ENCODE measurements at regions of chr13 and their contacts with region 1.

Region 1: DNA sequence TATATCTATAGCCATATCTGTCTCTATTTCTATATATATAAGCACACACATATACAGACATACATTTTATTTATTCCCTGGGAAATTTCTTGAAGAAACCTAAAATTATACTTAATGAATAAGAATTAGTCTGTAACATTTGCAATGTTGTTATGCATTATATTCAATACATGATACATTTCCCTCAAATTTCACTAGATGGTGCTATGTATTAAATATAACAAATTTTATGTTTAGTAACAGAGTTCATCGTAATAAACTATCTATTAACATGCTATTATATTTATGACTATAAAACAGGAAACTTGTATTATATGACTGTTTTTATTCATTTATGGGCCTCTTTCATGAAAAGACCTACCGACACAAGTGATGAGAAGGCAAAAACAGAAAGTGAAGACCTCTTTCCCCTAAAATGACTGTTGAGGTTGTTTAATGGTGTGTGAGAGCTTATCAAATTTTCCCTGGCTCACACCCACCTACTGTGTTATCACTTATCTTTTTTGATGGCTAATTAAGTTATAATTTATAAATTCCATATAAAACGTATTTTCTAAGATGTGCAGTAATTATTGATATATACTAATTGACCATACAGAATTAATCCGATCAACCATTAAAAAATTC is 881.9 kb downstream of the SLITRK6 start:
- DNase-seq: no peak
- H3K4me3 ChIP-seq: no peak overlapping the region
- H3K4me3 Mint-ChIP-seq: no peak overlapping the region
- H3K27ac ChIP-seq: no peak overlapping the region
- H3K27ac Mint-ChIP-seq: no peak overlapping the region
- H3K4me1 ChIP-seq: no peaks in the 10 kb centered on the region
- H3K4me1 Mint-ChIP-seq: no peaks in the 10 kb centered on the region
- H3K27me3 ChIP-seq: no peaks in the 10 kb centered on the region
- H3K27me3 Mint-ChIP-seq: no peaks in the 10 kb centered on the region

Region 2: GRCh38 chr13:84668637-84669036 is 248.7 kb before region 1 on chr13:
- CTCF ChIA-PET with region 1: no interaction called
- POLR2A ChIA-PET with region 1: no interaction called
- intact Hi-C with region 1: no loop called
- DNase-seq: no peak
- H3K4me3 ChIP-seq: no peak overlapping the region
- H3K4me3 Mint-ChIP-seq: no peak overlapping the region
- H3K27ac ChIP-seq: no peak overlapping the region
- H3K27ac Mint-ChIP-seq: no peak overlapping the region
- H3K4me1 ChIP-seq: no peaks in the 10 kb centered on the region
- H3K4me1 Mint-ChIP-seq: no peaks in the 10 kb centered on the region
- H3K27me3 ChIP-seq: no peaks in the 10 kb centered on the region
- H3K27me3 Mint-ChIP-seq: no peaks in the 10 kb centered on the region

Region 3: DNA sequence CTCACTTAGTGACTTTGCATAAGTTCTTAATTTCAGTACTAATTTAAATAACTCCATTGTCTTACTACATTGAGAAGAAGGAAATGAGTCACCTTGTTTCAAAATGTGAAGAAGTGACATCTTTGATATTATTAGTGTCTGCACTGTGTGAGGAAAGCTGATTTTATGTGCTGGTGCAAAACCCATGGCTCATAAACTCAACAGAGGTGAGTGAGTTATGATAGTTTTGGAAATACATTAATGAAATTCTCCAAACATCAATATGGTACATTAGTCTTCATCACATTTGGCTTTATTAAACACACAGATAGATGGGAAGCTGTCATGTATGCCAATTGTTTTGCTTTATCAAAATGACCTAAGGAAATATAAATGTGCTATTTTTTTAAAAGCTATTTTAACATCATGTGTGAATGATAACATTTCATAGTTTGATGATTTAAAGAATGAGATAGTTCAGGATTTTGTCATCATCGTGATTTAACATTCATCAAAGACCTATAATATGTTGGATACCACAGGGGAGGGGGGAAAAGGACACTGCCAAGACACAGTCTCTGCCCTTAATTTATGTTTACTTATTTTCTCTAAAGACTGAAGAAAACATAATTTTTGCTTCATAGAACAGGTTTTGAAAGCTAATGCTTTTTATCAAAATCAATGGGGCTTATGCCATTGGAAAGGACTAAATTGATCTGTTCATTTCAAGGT is 132.8 kb before region 1 on chr13:
- CTCF ChIA-PET with region 1: no interaction called
- POLR2A ChIA-PET with region 1: no interaction called
- intact Hi-C with region 1: no loop called
- DNase-seq: no peak
- H3K4me3 ChIP-seq: no peak overlapping the region
- H3K4me3 Mint-ChIP-seq: no peak overlapping the region
- H3K27ac ChIP-seq: no peak overlapping the region
- H3K27ac Mint-ChIP-seq: no peak overlapping the region
- H3K4me1 ChIP-seq: no peaks in the 10 kb centered on the region
- H3K4me1 Mint-ChIP-seq: no peaks in the 10 kb centered on the region
- H3K27me3 ChIP-seq: no peaks in the 10 kb centered on the region
- H3K27me3 Mint-ChIP-seq: no peaks in the 10 kb centered on the region

Region 4: DNA sequence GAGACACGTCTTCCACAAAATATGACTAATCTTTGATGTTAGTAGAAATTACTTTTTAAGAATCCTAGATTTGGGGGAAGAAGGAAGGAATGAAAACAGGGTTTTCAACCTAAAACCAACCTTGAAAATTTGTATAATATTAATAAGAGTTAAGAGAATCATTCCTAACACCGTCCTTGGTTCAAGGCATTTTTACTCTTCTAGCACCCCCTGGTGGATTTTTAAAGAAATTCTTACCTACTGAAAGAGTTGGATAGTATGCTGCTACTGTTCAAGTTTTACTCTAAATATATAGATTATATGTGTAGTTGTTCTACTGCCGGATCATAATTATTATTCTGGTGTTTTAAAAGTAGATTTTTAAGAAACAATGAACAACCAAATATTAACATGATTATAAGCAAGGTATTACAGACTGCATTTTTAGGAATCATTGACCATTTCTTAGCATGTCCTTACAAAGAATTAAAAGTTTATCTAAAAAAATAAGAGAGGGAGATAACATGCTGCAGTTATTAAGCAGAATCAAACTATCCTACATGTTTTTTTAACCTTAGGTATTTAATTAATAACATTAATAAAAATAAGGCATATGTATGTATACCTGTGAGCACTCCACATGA is 889.3 kb after region 1 on chr13:
- CTCF ChIA-PET with region 1: no interaction called
- POLR2A ChIA-PET with region 1: no interaction called
- intact Hi-C with region 1: loop called (anchors 5 kb)
- DNase-seq: peak in 3 of 5 donors; percentile 8 to 17 (median 17)
- H3K4me3 ChIP-seq: no peak overlapping the region
- H3K4me3 Mint-ChIP-seq: no peak overlapping the region
- H3K27ac ChIP-seq: no peak overlapping the region
- H3K27ac Mint-ChIP-seq: no peak overlapping the region
- H3K4me1 ChIP-seq: no peaks in the 10 kb centered on the region
- H3K4me1 Mint-ChIP-seq: no peaks in the 10 kb centered on the region
- H3K27me3 ChIP-seq: no peaks in the 10 kb centered on the region
- H3K27me3 Mint-ChIP-seq: no peaks in the 10 kb centered on the region

Measured in CD4-positive, alpha-beta memory T cell (primary cell).